Activated CD4-positive, alpha-beta memory T cell treated with anti-CD3 and anti-CD28 coated beads for 36 hours (primary cell): ENCODE measurements at regions of chr14 and their contacts with region 1.

Region 1: GRCh38 chr14:75542588-75543091 is 20.4 kb downstream of the BATF start:
- DNase-seq: peak; percentile 95
- H3K4me3 Mint-ChIP-seq: peak overlapping the region; percentile 68
- H3K27ac Mint-ChIP-seq: peak overlapping the region; percentile 99
- H3K4me1 Mint-ChIP-seq: peaks cover 83% of the 10 kb centered on the region
- H3K27me3 Mint-ChIP-seq: no peaks in the 10 kb centered on the region

Region 2: GRCh38 chr14:75497191-75497590 is 45.4 kb before region 1 on chr14:
- CTCF ChIA-PET with region 1: interaction called, 4 read pairs
- POLR2A ChIA-PET with region 1: interaction called, 8 read pairs
- intact Hi-C with region 1: loop called (anchors 1 kb)
- DNase-seq: peak; percentile 75
- H3K4me3 Mint-ChIP-seq: peak overlapping the region; percentile 59
- H3K27ac Mint-ChIP-seq: peak overlapping the region; percentile 82
- H3K4me1 Mint-ChIP-seq: peaks cover 54% of the 10 kb centered on the region
- H3K27me3 Mint-ChIP-seq: no peaks in the 10 kb centered on the region

Region 3: GRCh38 chr14:75555769-75556168 is 13.1 kb after region 1 on chr14:
- CTCF ChIA-PET with region 1: interaction called, 91 read pairs
- POLR2A ChIA-PET with region 1: interaction called, 69 read pairs
- intact Hi-C with region 1: loop called (anchors 1 kb)
- DNase-seq: peak; percentile 48
- H3K4me3 Mint-ChIP-seq: no peak overlapping the region
- H3K27ac Mint-ChIP-seq: peak overlapping the region; percentile 0
- H3K4me1 Mint-ChIP-seq: peaks cover 76% of the 10 kb centered on the region
- H3K27me3 Mint-ChIP-seq: no peaks in the 10 kb centered on the region

Region 4: DNA sequence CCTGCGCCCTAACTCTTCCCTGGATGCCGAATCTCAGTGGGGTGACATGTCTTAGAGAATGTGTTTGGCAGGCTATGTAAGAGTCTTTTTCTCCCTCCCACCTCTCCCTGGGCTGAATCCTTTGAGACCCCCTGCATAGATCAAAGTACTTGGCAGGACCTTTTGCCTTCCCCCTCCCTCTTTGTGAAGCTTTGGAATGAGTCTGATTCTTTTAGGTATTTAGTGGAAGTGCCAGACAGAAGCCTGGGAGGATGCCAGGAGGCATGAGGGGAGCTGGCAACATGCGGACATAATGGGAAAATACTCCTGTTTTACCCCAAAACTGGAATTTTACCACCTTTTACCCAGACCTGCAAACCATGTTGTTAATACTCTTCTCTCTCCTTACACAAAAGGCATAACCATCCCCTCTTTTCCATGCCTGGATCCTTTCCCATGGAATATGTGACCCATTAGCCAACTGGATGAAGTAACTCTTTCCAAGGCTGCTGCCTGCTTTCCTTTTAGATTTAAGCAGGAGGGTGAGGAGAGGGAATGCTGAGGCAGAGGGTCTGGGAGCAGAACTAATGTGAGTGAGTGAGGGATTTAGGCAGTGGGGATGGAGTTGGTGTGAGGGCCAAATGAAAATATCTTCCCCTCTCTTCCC is 160.1 kb after region 1 on chr14:
- CTCF ChIA-PET with region 1: no interaction called
- POLR2A ChIA-PET with region 1: no interaction called
- intact Hi-C with region 1: no loop called
- DNase-seq: no peak
- H3K4me3 Mint-ChIP-seq: no peak overlapping the region
- H3K27ac Mint-ChIP-seq: no peak overlapping the region
- H3K4me1 Mint-ChIP-seq: no peaks in the 10 kb centered on the region
- H3K27me3 Mint-ChIP-seq: no peaks in the 10 kb centered on the region

Region 5: GRCh38 chr14:75831458-75831857 is 288.8 kb after region 1 on chr14:
- CTCF ChIA-PET with region 1: no interaction called
- POLR2A ChIA-PET with region 1: no interaction called
- intact Hi-C with region 1: no loop called
- DNase-seq: peak; percentile 43
- H3K4me3 Mint-ChIP-seq: no peak overlapping the region
- H3K27ac Mint-ChIP-seq: peak overlapping the region; percentile 11
- H3K4me1 Mint-ChIP-seq: peaks cover 11% of the 10 kb centered on the region
- H3K27me3 Mint-ChIP-seq: no peaks in the 10 kb centered on the region